ENCODE measurements at regions of chr1 and their contacts with region 1.

Region 1: GRCh38 chr1:109532365-109533136 is 7.1 kb upstream of the GPR61 start:
- DNase-seq: no peak
- H3K4me3 ChIP-seq: peak overlapping the region; percentile 34
- CTCF ChIP-seq: peak; percentile 95

Region 2: DNA sequence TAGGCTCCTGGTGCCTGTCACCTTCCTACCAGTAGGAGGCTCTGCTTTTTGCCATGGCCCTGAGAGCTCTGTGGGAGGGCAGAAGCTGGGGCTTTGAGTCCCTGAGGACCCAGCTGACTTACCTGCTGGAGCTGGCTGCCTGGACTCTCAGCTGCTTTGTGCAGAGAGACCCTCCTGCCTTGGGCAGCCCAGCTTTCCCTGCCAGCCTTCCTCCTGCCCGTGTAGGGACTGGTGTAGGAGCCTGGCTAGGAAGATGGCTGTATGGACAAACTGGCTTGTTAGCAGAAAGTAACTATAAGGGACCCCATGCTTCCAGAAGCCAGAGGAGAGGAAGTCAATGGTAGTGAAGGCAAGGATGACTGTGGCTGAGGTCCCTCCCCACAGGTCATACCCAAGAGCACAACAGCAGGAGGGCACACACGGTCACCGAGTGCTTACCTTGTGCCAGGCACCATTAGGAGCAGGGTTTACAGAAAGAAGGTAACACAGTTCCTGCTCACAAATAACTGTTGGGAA is 292.9 kb before region 1 on chr1:
- CTCF ChIA-PET with region 1: interaction called, 11 read pairs
- POLR2A ChIA-PET with region 1: no interaction called
- DNase-seq: no peak
- H3K4me3 ChIP-seq: no peak overlapping the region
- CTCF ChIP-seq: peak; percentile 62

Region 3: GRCh38 chr1:109397538-109398342 is 134.8 kb before region 1 on chr1 and contains the start of gene SORT1:
- CTCF ChIA-PET with region 1: interaction called, 67 read pairs
- POLR2A ChIA-PET with region 1: no interaction called
- DNase-seq: no peak
- H3K4me3 ChIP-seq: peak within 1 kb of the TSS; percentile 63
- CTCF ChIP-seq: no peak

Region 4: DNA sequence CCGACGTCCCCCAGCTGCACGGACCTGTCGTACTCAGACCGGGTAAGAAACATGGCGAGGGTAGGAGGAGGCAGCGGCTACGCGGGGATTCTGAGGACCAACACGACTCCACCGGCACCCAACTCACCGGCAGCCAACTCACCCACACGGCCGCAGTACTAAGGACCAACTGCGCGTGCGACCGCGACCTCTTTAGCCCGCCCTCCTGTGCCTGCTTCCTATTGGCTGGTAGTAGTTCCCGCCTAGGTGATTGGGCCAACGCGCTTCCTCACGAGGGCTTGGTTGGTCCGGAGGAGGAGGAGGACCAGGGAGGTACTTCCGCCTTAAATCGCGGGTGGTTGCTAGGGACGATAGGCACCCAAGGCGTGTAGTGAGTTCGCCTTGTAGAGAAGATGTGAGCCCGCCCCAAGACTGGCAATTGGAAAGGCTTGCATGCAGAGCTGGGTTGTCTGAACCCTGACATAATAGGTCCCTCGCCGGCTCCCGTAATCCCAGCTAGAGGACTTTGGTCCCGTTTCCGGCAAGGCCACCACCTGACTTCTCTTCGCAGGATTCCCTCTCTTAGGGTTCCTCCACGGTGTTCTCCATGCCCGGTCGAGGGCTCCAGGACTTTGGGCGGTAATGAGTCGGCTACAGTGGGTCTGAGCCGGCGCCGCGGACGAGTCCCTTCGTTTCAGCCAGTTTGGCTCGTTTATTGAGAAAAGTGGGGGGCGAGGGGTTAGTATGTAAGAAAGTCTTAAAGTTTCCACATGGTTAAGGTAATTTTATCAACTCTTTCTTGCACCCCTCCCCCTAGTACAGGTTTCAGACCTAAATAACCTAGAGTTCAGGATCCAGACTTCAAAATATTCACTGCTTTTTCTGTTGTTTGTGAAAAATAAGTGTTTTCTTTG is 106.0 kb before region 1 on chr1 and contains the start of gene PSMA5:
- CTCF ChIA-PET with region 1: interaction called, 86 read pairs
- POLR2A ChIA-PET with region 1: no interaction called
- DNase-seq: peak; percentile 97
- H3K4me3 ChIP-seq: peak within 1 kb of the TSS; percentile 92
- CTCF ChIP-seq: no peak

Region 5: DNA sequence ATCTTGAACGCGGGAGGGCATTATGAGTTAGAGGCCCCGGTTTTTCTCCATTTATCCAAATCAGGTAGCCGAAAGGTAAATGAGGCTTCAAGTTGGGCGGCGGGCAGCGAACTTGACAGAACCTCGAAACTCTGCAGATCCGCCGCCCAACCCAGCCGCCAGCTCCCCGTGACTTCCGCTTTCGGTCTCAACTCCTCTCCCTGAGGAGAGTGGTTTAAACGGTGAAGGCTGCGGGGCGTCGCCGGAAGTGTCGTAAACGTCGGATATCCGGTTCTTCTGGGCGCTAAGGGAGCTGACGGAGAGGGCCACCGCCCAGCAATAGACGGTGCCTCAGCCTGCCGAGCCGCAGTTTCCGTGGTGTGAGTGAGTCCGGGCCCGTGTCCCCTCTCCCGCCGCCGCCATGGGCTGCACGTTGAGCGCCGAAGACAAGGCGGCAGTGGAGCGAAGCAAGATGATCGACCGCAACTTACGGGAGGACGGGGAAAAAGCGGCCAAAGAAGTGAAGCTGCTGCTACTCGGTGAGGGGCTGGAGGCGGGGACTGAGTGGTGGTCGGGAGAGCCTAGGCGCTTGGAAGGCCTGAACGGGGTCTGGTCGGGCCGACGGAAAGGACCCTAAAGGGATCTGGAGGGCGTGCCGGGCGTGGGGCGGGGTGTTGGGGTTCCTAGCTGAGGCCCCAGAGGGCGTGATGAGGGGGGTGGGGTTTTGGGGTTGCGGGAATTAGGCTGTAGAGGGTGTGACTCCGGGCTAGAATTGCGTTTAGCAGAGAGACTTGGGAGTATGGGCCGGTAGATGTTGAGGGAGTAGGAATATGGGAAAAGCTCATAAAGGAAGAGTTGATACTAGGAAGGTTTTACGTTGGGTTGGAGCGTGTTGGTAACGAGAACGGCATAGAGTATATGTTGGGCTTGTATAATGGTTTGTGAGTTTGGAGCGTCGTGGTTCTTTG is 16.0 kb after region 1 on chr1 and contains the start of gene GNAI3:
- CTCF ChIA-PET with region 1: interaction called, 194 read pairs
- POLR2A ChIA-PET with region 1: interaction called, 6 read pairs
- DNase-seq: peak; percentile 72
- H3K4me3 ChIP-seq: peak within 1 kb of the TSS; percentile 95
- CTCF ChIP-seq: no peak

Region 6: GRCh38 chr1:109704173-109704572 is 171.6 kb after region 1 on chr1:
- CTCF ChIA-PET with region 1: no interaction called
- POLR2A ChIA-PET with region 1: no interaction called
- DNase-seq: no peak
- H3K4me3 ChIP-seq: no peak overlapping the region
- CTCF ChIP-seq: no peak

Region 7: DNA sequence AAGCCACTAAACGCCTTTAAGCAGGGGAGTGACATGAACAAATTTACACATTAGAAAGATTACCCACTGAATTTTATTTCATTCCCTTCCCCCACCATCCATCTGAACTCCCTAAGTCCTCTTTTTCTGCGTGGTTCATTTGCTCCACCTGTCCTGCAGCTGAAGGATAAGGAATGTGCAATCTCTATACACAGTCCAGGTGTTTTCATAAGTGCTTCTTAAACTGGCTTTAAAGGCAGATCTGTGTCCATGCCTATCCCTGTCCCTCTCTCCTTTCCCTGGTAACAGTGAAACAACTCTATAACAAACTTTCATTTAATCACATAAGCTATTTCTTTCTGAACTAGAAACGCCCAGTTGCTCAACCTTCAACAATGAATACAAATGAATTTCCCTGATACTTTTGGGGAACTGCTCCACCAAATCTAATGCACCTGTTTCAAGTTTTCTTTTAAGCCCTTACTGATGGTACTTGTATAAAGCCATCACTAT is 199.9 kb after region 1 on chr1:
- CTCF ChIA-PET with region 1: no interaction called
- POLR2A ChIA-PET with region 1: no interaction called
- DNase-seq: no peak
- H3K4me3 ChIP-seq: no peak overlapping the region
- CTCF ChIP-seq: no peak

Region 8: DNA sequence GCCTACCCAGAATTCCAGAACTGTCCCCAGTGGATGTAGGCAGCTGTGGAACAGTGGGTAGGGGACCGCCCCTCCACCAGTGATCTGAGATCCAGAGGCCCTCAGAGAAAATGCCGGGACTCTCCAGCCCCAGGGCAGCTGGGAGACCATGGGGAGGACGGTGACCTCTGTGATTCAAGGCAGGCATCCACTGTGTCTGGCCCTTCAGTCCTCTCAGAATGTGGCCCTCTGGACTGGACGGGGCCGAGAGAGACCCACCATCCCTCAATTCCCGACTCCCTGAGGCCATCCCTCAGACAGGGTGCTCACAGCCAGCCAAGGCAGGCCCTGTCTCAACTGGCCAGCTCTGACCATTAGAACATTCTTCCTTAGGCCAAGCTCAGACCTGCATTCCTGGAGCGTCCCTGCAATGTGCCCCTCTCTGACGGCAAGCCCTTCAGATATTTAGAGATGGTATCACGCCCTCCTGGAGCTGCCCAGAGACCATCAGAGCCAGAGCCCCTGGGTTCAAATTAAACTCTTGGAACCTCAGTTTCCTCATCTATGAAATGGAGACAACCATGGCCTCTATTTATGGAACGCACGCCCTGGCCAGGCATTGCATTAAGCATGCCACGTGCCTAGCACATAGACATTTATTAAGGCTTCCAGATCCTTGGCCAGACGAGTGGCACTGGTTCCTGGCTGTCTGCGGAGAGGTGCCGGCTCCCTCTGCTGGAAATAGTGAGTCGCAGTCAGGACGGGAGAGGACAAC is 240.8 kb after region 1 on chr1:
- CTCF ChIA-PET with region 1: interaction called, 377 read pairs
- POLR2A ChIA-PET with region 1: no interaction called
- DNase-seq: peak; percentile 40
- H3K4me3 ChIP-seq: no peak overlapping the region
- CTCF ChIP-seq: peak; percentile 96

Measured in AG04449 (cell line).